Activated T-helper 1 cell treated with anti-CD3 and anti-CD28 coated beads, Interleukin-12 subunit alpha, Interleukin-12 subunit beta, Interleukin-2, Interleukin-4 antibody, amounts not matched to agents 30 ng/mL and 10 ng/mL and 1 ng/mL, durations not matched to agents 14 hours and 24 hours and 36 hours (primary cell): ENCODE measurements at regions of chr2 and their contacts with region 1.

Region 1: GRCh38 chr2:45119855-45120254 is 110.6 kb upstream of the SIX2 start:
- DNase-seq: no peak
- H3K4me3 Mint-ChIP-seq: no peak overlapping the region
- H3K27ac Mint-ChIP-seq: no peak overlapping the region
- H3K4me1 Mint-ChIP-seq: no peaks in the 10 kb centered on the region
- H3K27me3 Mint-ChIP-seq: peaks cover 5% of the 10 kb centered on the region

Region 2: GRCh38 chr2:44952143-44952805 is 167.6 kb before region 1 on chr2:
- intact Hi-C with region 1: no loop called
- DNase-seq: no peak
- H3K4me3 Mint-ChIP-seq: no peak overlapping the region
- H3K27ac Mint-ChIP-seq: no peak overlapping the region
- H3K4me1 Mint-ChIP-seq: no peaks in the 10 kb centered on the region
- H3K27me3 Mint-ChIP-seq: peaks cover 83% of the 10 kb centered on the region

Region 3: DNA sequence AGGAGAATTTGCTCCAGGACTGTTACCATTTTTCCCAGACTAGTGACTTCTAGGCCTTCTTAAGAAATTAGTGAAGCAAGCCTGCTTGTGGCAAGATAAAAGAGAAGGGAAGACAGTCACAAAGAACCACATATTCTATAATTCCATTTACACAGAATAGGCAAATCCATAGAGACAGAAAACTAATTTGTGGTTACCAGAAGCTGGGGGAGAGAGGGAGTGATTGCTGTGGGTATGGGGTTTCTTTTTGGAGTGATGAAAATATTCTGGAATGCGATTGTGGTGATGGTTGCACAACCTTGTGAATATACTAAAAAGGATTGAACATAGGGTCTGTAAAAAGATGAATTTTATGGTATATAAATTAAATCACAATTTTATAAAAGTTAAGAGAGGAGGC is 73.1 kb before region 1 on chr2:
- intact Hi-C with region 1: loop called (anchors 10 kb)
- DNase-seq: no peak
- H3K4me3 Mint-ChIP-seq: no peak overlapping the region
- H3K27ac Mint-ChIP-seq: no peak overlapping the region
- H3K4me1 Mint-ChIP-seq: no peaks in the 10 kb centered on the region
- H3K27me3 Mint-ChIP-seq: peaks cover 3% of the 10 kb centered on the region

Region 4: GRCh38 chr2:45960057-45960863 is 840.4 kb after region 1 on chr2:
- intact Hi-C with region 1: no loop called
- DNase-seq: no peak
- H3K4me3 Mint-ChIP-seq: no peak overlapping the region
- H3K27ac Mint-ChIP-seq: no peak overlapping the region
- H3K4me1 Mint-ChIP-seq: peaks cover 5% of the 10 kb centered on the region
- H3K27me3 Mint-ChIP-seq: peaks cover 5% of the 10 kb centered on the region